Posterior vena cava (tissue), 2 donors: ENCODE measurements at regions of chr20 and their contacts with region 1.

Region 1: GRCh38 chr20:57596998-57597939 is 23.0 kb downstream of the ZBP1 start:
- DNase-seq: peak; percentile 91

Region 2: GRCh38 chr20:57241363-57241991 is 355.8 kb before region 1 on chr20:
- intact Hi-C with region 1: no loop called
- DNase-seq: no peak

Region 3: GRCh38 chr20:57391074-57391554 is 206.2 kb before region 1 on chr20 and contains the start of gene RBM38:
- intact Hi-C with region 1: loop called in 1 of 2 experiments (anchors 10 kb)
- DNase-seq: peak; percentile 90
- total RNA-seq, gene RBM38: 26.5 to 32.7 TPM

Region 4: GRCh38 chr20:57514273-57514751 is 83.0 kb before region 1 on chr20:
- intact Hi-C with region 1: loop called (anchors 2 to 5 kb)
- DNase-seq: no peak

Region 5: DNA sequence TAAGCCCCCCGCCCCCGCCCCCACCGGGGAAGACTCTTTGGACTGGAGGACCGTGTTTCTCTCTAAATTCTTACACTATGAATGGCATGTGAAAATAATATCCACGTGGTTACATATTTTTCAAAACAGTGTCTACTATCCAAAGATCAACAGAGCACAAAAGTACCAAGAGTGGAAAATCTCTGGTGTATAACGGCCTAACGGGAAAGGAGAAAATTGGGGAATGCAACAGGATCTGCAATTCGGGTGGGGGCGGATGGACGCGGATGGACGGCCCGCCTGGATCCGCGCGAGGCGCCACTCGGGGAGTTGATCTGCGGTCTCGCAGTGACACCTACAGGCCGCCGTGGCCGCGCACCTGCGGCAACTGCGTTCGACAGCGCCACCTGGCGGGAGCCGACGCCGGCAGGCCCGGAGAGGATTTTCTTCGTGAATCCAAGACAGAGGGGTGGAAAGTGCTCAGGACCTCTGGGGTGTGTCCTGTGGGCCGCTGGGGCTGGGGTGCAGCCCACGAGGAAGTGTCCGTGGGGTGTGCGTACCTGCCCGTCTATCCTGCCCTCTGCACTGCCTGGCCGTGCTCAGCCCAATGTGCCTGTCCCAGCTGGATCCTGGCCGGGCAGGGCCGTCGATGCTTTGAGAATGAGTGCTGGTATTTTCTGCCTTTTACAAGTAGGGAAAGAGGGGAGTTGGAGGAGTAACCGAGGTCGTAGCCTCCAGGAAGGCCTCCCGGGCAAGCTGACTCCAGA is 612.6 kb after region 1 on chr20:
- intact Hi-C with region 1: loop called in 1 of 2 experiments (anchors 1 kb)
- DNase-seq: peak; percentile 96